Caco-2 (cell line): ENCODE measurements at regions of chr6 and their contacts with region 1.

Region 1: GRCh38 chr6:76351275-76351674 is 278.8 kb upstream of the IMPG1 start:
- DNase-seq: peak in 1 of 2 experiments; percentile 35
- H3K4me3 ChIP-seq: no peak overlapping the region
- H3K4me3 Mint-ChIP-seq: no peak overlapping the region
- H3K27ac Mint-ChIP-seq: no peak overlapping the region
- H3K4me1 ChIP-seq: no peaks in the 10 kb centered on the region
- H3K4me1 Mint-ChIP-seq: no peaks in the 10 kb centered on the region
- H3K27me3 ChIP-seq: no peaks in the 10 kb centered on the region
- H3K27me3 Mint-ChIP-seq: no peaks in the 10 kb centered on the region
- CTCF ChIP-seq: peak; percentile 39 to 67

Region 2: DNA sequence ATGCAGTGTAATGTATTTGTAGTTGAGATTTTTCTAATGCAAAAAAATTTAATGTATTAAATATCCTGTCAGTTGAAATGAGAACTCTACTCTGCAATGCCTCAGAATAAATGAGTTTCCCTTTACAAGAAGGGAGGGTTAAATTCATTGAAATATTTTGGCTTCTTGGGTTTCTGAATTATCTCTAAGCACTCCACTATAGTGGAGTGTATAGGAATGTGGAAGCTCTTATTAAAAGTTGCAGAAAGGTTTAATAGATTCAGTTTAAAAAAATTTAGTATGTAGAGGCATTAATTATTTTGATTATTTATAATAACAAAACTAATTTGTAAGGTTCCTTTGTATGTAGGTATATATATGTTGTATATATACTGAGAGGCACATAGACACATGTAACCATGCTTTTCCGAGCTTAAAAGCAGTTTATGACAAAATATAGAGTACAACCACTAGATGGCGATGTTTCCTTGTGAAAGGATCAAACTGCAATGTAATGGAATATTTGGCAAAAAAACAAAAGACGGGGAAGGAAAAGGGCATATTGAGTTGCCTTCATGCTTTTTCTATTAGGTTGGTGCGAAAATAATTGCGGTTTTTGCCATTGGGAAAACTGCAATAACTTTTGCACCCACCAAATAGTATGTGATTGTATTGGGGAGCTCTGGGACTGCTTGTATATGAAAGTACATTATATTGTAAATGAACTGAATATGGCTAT is 458.1 kb before region 1 on chr6:
- CTCF ChIA-PET with region 1: interaction called, 8 read pairs
- POLR2A ChIA-PET with region 1: no interaction called
- intact Hi-C with region 1: loop called (anchors 2 kb)
- DNase-seq: peak in 1 of 2 experiments; percentile 53
- H3K4me3 ChIP-seq: no peak overlapping the region
- H3K4me3 Mint-ChIP-seq: no peak overlapping the region
- H3K27ac Mint-ChIP-seq: no peak overlapping the region
- H3K4me1 ChIP-seq: no peaks in the 10 kb centered on the region
- H3K4me1 Mint-ChIP-seq: no peaks in the 10 kb centered on the region
- H3K27me3 ChIP-seq: no peaks in the 10 kb centered on the region
- H3K27me3 Mint-ChIP-seq: no peaks in the 10 kb centered on the region
- CTCF ChIP-seq: peak; percentile 52 to 53

Region 3: GRCh38 chr6:76275746-76276145 is 75.5 kb before region 1 on chr6:
- CTCF ChIA-PET with region 1: no interaction called
- POLR2A ChIA-PET with region 1: no interaction called
- intact Hi-C with region 1: loop called (anchors 1 kb)
- DNase-seq: peak in 1 of 2 experiments; percentile 13
- H3K4me3 ChIP-seq: no peak overlapping the region
- H3K4me3 Mint-ChIP-seq: no peak overlapping the region
- H3K27ac Mint-ChIP-seq: no peak overlapping the region
- H3K4me1 ChIP-seq: no peaks in the 10 kb centered on the region
- H3K4me1 Mint-ChIP-seq: no peaks in the 10 kb centered on the region
- H3K27me3 ChIP-seq: no peaks in the 10 kb centered on the region
- H3K27me3 Mint-ChIP-seq: no peaks in the 10 kb centered on the region
- CTCF ChIP-seq: peak; percentile 2 to 39